ENCODE measurements at regions of chr10 and their contacts with region 1.

Region 1: DNA sequence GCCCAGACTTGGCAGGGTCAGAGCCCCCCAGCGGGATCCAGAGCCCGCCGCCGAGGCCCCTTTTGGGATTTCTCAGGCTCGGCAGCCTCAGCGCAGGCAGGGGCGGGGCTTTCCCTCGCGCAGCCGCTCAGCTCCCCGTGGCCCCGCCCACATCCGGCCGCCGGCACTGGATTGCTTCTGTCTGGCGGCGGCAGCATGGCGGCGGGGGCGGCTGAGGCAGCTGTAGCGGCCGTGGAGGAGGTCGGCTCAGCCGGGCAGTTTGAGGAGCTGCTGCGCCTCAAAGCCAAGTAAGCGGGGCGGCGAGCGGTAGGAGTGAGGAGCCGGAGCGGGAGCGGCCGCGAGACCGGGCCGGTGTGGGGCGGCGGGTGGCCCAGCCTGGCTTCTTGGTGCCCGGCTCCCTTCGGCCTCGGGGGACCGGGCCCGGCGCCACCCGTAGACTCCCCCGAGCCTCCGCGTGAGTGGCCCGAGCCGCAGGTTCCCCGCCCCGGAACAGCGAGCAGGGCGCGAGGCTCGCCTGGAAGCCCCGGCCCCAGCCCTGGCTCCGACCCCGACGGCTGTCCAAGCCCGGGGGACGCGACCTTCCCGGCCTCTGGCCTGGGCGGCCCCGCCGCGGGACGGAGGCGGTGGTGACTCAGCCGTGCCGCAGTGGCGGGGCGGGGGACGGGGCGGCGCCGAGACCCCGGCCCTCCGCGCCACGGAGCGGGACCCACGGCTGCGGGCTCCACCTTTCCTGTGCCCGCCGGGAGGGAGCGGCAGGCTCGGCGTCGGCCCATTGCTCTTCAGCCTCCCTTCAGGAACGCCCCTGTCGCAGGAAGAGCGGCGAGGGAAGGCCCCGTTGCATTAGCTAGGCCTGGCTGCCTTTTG is at the start of gene GLRX3:
- DNase-seq: peak; percentile 82 to 94 (median 89)
- H3K4me3 ChIP-seq: peak within 1 kb of the TSS; percentile 62 to 100 (median 94)
- H3K27ac ChIP-seq: peak within 1 kb of the TSS in 4 of 5 donors; percentile 85 to 94 (median 88)
- H3K4me1 ChIP-seq: peaks cover 31 to 38% of the 10 kb centered on the region in 2 donors
- H3K27me3 ChIP-seq: no peaks in the 10 kb centered on the region
- CTCF ChIP-seq: no peak
- POLR2A ChIP-seq: peak in 1 of 2 donors; percentile 79
- total RNA-seq, gene GLRX3: 46.5 to 129 (median 73.6) TPM

Region 2: GRCh38 chr10:130000918-130001317 is 135.5 kb before region 1 on chr10:
- intact Hi-C with region 1: no loop called
- DNase-seq: no peak
- H3K4me3 ChIP-seq: no peak overlapping the region
- H3K27ac ChIP-seq: no peak overlapping the region
- H3K4me1 ChIP-seq: no peaks in the 10 kb centered on the region
- H3K27me3 ChIP-seq: no peaks in the 10 kb centered on the region
- CTCF ChIP-seq: no peak
- POLR2A ChIP-seq: no peak

Region 3: GRCh38 chr10:130110246-130111112 is 26.0 kb before region 1 on chr10 and contains the start of gene C10orf143:
- intact Hi-C with region 1: loop called in 1 of 2 experiments (anchors 2 kb)
- DNase-seq: peak; percentile 98 to 99 (median 99)
- H3K4me3 ChIP-seq: peak within 1 kb of the TSS; percentile 34 to 97 (median 62)
- H3K27ac ChIP-seq: peak within 1 kb of the TSS; percentile 37 to 92 (median 89)
- H3K4me1 ChIP-seq: peaks cover 0 to 24% of the 10 kb centered on the region in 2 donors
- H3K27me3 ChIP-seq: no peaks in the 10 kb centered on the region
- CTCF ChIP-seq: no peak
- POLR2A ChIP-seq: peak; percentile 68 to 71
- total RNA-seq, gene C10orf143: 0.85 to 5.7 (median 4.4) TPM